GM12878 (cell line): ENCODE measurements at regions of chr6 and their contacts with region 1.

Region 1: DNA sequence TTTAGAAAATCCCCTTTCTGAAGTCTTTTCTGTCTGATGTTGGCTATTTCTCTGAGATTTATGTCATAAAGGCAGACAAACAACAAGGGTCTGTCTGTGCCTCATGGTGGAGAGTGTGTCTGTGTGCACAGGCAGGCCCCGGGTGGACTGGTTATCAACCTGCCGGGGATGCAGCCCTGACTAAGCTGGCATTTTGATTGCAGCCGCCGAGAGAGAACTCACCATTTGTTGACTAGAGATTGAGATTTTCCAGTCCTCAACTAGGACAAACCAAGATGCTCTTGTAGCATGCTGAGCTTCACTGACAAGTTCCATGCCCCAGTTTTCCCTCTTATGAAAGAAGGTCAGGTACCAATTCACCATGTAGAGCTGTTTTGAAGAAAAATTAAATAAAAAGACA is 363.6 kb upstream of the CNR1 start:
- DNase-seq: no peak
- ATAC-seq: no peak
- H3K4me3 ChIP-seq: no peak overlapping the region
- H3K27ac ChIP-seq: no peak overlapping the region
- H3K4me1 ChIP-seq: no peaks in the 10 kb centered on the region
- H3K27me3 ChIP-seq: no peaks in the 10 kb centered on the region
- CTCF ChIP-seq: no peak
- EP300 ChIP-seq: no peak
- POLR2A ChIP-seq: no peak
- RAD21 ChIP-seq: no peak

Region 2: GRCh38 chr6:88519301-88520016 is 10.3 kb before region 1 on chr6:
- CTCF ChIA-PET with region 1: no interaction called
- POLR2A ChIA-PET with region 1: interaction called, 3 read pairs
- RAD21 ChIA-PET with region 1: no interaction called
- SMC1A ChIA-PET with region 1: interaction called, 10 read pairs
- in situ Hi-C with region 1: no loop called
- intact Hi-C with region 1: no loop called
- DNase-seq: no peak
- ATAC-seq: no peak; the same call in 2 of the 3 replicates
- H3K4me3 ChIP-seq: no peak overlapping the region
- H3K27ac ChIP-seq: no peak overlapping the region
- H3K4me1 ChIP-seq: no peaks in the 10 kb centered on the region
- H3K27me3 ChIP-seq: no peaks in the 10 kb centered on the region
- CTCF ChIP-seq: no peak
- EP300 ChIP-seq: no peak
- POLR2A ChIP-seq: no peak
- RAD21 ChIP-seq: no peak